Posterior vena cava (tissue), 2 donors: ENCODE measurements at regions of chr2 and their contacts with region 1.

Region 1: GRCh38 chr2:86623651-86624541 is at the start of gene RNF103:
- DNase-seq: peak; percentile 99
- total RNA-seq, gene RNF103: 29.0 to 37.0 TPM

Region 2: GRCh38 chr2:86562922-86563649 is 60.8 kb before region 1 on chr2 and contains the start of gene CHMP3:
- intact Hi-C with region 1: loop called in 1 of 2 experiments (anchors 10 kb)
- DNase-seq: peak; percentile 99
- total RNA-seq, gene CHMP3: 166 to 167 TPM

Region 3: DNA sequence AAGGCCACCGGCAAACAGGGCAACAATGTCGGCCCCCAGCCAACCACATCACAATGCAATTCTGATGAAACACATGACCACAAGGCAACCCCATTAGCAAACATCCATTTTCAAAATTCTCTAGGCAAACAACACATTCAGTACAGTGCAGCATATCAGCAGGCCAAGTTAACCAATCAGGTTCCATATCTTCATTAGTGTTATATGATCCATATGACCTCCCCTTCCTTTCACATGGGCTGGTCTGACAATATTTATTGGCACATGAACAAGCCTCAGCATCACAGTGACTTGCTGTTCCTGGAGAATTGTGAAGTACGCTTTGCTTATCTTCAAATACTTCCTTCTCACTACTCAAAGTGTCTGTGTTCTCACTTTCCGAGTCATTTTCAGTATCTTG is 20.0 kb before region 1 on chr2:
- intact Hi-C with region 1: no loop called
- DNase-seq: no peak

Region 4: DNA sequence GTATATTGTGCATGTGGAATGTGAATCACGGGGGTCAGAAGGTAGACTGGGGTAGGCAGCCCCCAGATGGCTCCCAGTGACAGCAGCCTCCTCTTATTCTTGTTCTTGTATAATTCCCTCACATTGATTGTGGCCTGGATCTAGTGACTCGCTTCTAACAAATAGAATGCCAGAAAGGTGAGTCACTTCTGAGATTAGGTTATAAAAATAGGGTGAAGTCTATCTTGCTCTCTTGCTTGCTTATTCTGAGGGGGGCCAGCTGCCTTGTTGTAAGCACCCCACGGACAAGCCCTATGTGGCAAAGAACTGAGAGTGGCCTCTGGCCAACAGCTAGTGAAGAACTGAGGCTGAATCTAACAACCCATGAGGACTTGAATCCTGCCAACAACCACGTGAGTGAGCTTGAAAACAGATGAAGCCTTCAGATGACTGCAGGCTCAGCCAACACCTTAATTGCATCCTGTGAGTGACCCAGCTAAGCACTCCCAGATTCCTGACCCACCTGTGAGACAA is 80.6 kb after region 1 on chr2:
- intact Hi-C with region 1: loop called in 1 of 2 experiments (anchors 5 kb)
- DNase-seq: no peak

Region 5: GRCh38 chr2:86778957-86779356 is 155.1 kb after region 1 on chr2:
- intact Hi-C with region 1: no loop called
- DNase-seq: no peak